ENCODE measurements at regions of chr11 and their contacts with region 1.

Region 1: DNA sequence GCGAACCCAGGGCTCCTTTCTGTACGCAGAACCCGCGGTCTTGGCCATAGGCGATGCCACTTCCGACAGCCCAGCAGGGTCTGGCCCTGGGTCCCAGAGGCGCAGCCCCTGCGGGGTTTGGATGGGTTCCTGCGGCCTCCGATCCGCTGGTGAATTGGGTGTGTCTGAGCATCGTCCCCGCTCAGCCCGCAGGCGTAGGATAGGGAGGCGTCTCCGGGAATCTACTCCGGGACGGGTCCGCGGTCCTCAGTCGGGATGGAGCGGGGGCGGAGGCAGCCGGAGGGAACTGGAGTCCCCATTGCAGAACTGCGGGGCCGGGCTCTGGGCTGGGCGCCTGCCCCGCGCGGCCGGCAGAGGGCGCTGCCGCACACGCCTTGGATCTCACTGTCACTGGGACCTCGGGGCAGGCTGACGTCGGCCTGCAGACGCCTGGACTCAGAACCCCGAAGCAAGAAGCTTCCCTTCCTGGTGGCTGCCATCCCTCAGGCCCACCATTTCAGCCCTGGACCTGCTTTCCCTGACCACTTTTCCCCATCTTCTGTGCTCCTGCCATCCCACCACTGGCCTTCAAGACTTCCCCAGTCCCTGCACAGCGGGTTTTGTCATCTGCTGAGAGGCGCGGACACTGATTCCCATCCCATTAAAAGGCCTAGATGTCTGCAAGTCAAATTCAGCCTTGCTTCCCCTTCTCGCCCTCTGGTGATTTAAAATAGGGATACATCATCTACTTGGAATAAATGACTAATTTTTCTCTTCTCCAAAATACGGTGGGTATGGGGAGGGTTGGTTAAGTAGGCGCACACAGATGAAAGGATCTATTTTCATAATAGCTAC is 38.3 kb upstream of the CREB3L1 start:
- DNase-seq: peak; percentile 42 to 90 (median 70)
- ATAC-seq: peak; percentile 73 to 78 (median 75)
- H3K4me3 ChIP-seq: peak overlapping the region; percentile 33 to 58
- H3K4me3 Mint-ChIP-seq: peak overlapping the region; percentile 62 to 95 (median 71)
- H3K27ac ChIP-seq: no peak overlapping the region
- H3K27ac Mint-ChIP-seq: no peak overlapping the region
- H3K4me1 ChIP-seq: peaks cover 2 to 34% of the 10 kb centered on the region in 2 experiments
- H3K4me1 Mint-ChIP-seq: peaks cover 12 to 40% (median 33%) of the 10 kb centered on the region in 3 donors
- H3K27me3 ChIP-seq: peaks cover 4 to 24% of the 10 kb centered on the region in 2 experiments
- H3K27me3 Mint-ChIP-seq: peaks cover 16 to 27% of the 10 kb centered on the region in 2 donors

Region 2: GRCh38 chr11:46050003-46050461 is 189.2 kb before region 1 on chr11:
- CTCF ChIA-PET with region 1: no interaction called
- POLR2A ChIA-PET with region 1: no interaction called
- DNase-seq: no peak
- ATAC-seq: no peak
- H3K4me3 ChIP-seq: no peak overlapping the region
- H3K4me3 Mint-ChIP-seq: no peak overlapping the region
- H3K27ac ChIP-seq: no peak overlapping the region
- H3K27ac Mint-ChIP-seq: no peak overlapping the region
- H3K4me1 ChIP-seq: no peaks in the 10 kb centered on the region
- H3K4me1 Mint-ChIP-seq: peaks cover 5 to 15% (median 13%) of the 10 kb centered on the region in 3 donors
- H3K27me3 ChIP-seq: no peaks in the 10 kb centered on the region
- H3K27me3 Mint-ChIP-seq: no peaks in the 10 kb centered on the region

Region 3: GRCh38 chr11:46308631-46309419 is 69.6 kb after region 1 on chr11:
- CTCF ChIA-PET with region 1: interaction called, 12 to 13 read pairs
- POLR2A ChIA-PET with region 1: no interaction called
- DNase-seq: peak in 33 of 35 experiments; percentile 15 to 75 (median 53)
- ATAC-seq: peak; percentile 69 to 82 (median 76)
- H3K4me3 ChIP-seq: no peak overlapping the region
- H3K4me3 Mint-ChIP-seq: peak overlapping the region in 1 of 3 donors; percentile 11
- H3K27ac ChIP-seq: no peak overlapping the region
- H3K27ac Mint-ChIP-seq: no peak overlapping the region
- H3K4me1 ChIP-seq: peaks cover 6 to 21% of the 10 kb centered on the region in 2 experiments
- H3K4me1 Mint-ChIP-seq: peaks cover 6 to 18% (median 13%) of the 10 kb centered on the region in 3 donors
- H3K27me3 ChIP-seq: peaks cover 0 to 16% of the 10 kb centered on the region in 2 experiments
- H3K27me3 Mint-ChIP-seq: peaks cover 0 to 3% of the 10 kb centered on the region in 2 donors

Region 4: GRCh38 chr11:46315033-46315738 is 76.0 kb after region 1 on chr11:
- CTCF ChIA-PET with region 1: interaction called, 12 to 13 read pairs
- POLR2A ChIA-PET with region 1: no interaction called
- DNase-seq: peak; percentile 26 to 86 (median 64)
- ATAC-seq: peak; percentile 63 to 81 (median 72)
- H3K4me3 ChIP-seq: no peak overlapping the region
- H3K4me3 Mint-ChIP-seq: no peak overlapping the region
- H3K27ac ChIP-seq: no peak overlapping the region
- H3K27ac Mint-ChIP-seq: peak overlapping the region in 1 of 2 donors; percentile 81
- H3K4me1 ChIP-seq: peaks cover 18 to 31% of the 10 kb centered on the region in 2 experiments
- H3K4me1 Mint-ChIP-seq: peaks cover 20 to 32% (median 22%) of the 10 kb centered on the region in 3 donors
- H3K27me3 ChIP-seq: peaks cover 0 to 27% of the 10 kb centered on the region in 2 experiments
- H3K27me3 Mint-ChIP-seq: no peaks in the 10 kb centered on the region

Region 5: DNA sequence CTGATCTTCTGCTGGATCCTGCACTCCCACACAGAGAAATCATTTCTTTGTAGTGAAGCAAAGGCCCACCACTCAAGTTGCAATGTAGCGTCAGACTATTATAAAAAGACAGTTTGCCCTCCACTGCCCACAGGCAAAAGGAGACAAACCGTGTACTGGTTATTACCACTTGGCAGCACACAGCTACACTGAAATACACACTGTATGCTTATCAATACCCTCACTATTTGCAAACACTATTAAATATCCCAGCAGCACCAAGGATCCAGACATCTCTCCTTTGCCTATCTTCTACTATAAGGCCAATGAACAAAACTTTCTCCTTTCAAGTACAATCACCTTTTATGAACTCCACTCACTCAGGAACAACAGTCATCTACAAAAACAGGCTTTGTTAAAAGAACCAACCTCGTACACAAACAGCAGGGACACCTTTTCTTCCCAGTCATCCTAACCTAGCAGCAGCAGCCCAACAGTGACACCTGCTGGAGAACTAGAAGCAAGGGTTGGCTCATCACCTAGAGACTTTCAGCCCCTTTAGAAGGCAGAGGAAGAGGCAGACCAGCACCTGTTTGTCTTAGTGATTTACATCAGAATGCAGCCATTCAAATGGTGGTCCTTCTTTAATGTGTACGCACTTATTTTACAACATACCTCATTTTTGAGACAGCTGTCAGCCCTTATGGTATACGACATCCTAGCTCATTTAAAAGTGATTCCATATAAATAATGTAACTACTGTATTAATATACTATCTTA is 298.5 kb after region 1 on chr11:
- CTCF ChIA-PET with region 1: interaction called, 3 to 11 read pairs
- POLR2A ChIA-PET with region 1: no interaction called
- DNase-seq: peak; percentile 17 to 80 (median 50)
- ATAC-seq: peak; percentile 75 to 88 (median 81)
- H3K4me3 ChIP-seq: no peak overlapping the region
- H3K4me3 Mint-ChIP-seq: no peak overlapping the region
- H3K27ac ChIP-seq: no peak overlapping the region
- H3K27ac Mint-ChIP-seq: no peak overlapping the region
- H3K4me1 ChIP-seq: no peaks in the 10 kb centered on the region
- H3K4me1 Mint-ChIP-seq: peaks cover 39 to 58% (median 41%) of the 10 kb centered on the region in 3 donors
- H3K27me3 ChIP-seq: no peaks in the 10 kb centered on the region
- H3K27me3 Mint-ChIP-seq: no peaks in the 10 kb centered on the region

Region 6: GRCh38 chr11:47280860-47281259 is 1041.7 kb after region 1 on chr11:
- CTCF ChIA-PET with region 1: no interaction called
- POLR2A ChIA-PET with region 1: interaction called in 1 of 2 experiments, 15 read pairs
- DNase-seq: no peak
- ATAC-seq: no peak
- H3K4me3 ChIP-seq: no peak overlapping the region
- H3K4me3 Mint-ChIP-seq: no peak overlapping the region
- H3K27ac ChIP-seq: no peak overlapping the region
- H3K27ac Mint-ChIP-seq: no peak overlapping the region
- H3K4me1 ChIP-seq: no peaks in the 10 kb centered on the region
- H3K4me1 Mint-ChIP-seq: peaks cover 0 to 6% (median 2%) of the 10 kb centered on the region in 3 donors
- H3K27me3 ChIP-seq: no peaks in the 10 kb centered on the region
- H3K27me3 Mint-ChIP-seq: no peaks in the 10 kb centered on the region